GM13977 (cell line): ENCODE measurements at regions of chr14 and their contacts with region 1.

Region 1: DNA sequence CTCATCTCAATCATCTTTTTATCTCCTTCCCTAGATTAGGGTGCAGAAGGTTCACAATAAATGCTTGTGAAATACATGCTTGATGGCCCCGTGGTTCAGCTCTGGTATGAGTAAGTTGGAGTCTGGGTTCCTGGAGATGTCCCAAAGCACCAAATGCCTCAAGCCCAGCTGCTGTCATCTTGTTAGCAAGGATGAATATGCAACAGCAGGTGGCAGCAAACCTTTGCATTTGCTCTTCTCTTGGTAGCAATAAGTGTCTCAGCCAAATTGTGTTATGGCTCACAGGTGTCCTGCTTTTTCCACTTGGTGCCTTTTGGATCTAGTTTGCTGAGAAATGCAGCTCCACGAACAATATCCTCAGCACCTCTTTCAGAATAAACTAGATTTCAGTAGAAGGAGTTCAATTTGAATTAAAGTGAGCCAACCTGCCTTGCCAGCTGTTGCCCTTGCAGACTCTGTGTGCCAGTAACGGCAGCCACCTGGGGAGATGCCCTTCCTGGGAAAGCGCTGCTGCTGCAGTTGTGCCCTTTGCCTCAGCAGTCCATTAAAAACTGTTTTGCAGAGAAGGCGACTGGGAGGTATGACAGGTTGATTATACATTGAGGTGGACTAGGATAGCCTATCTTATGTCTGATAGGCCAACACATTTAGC is 417.3 kb downstream of the SNAPC1 start:
- DNase-seq: peak; percentile 23
- CTCF ChIP-seq: peak; percentile 69

Region 2: GRCh38 chr14:63044994-63045611 is 865.6 kb after region 1 on chr14 and contains the start of gene KCNH5:
- in situ Hi-C with region 1: loop called (anchors 25 kb)
- DNase-seq: peak; percentile 57
- CTCF ChIP-seq: no peak

Region 3: GRCh38 chr14:63276492-63277342 is 1097.2 kb after region 1 on chr14:
- in situ Hi-C with region 1: loop called (anchors 10 kb)
- DNase-seq: peak; percentile 53
- CTCF ChIP-seq: peak; percentile 76